Mammary epithelial cell (primary cell): ENCODE measurements at regions of chr3 and their contacts with region 1.

Region 1: GRCh38 chr3:177286034-177286433 is 88.8 kb upstream of the TBL1XR1 start:
- DNase-seq: peak; percentile 92
- H3K4me3 ChIP-seq: no peak overlapping the region
- H3K27ac ChIP-seq: peak overlapping the region; percentile 81
- H3K4me1 ChIP-seq: peaks cover 12% of the 10 kb centered on the region
- H3K27me3 ChIP-seq: no peaks in the 10 kb centered on the region
- CTCF ChIP-seq: no peak

Region 2: GRCh38 chr3:177333533-177334520 is 47.8 kb after region 1 on chr3:
- CTCF ChIA-PET with region 1: no interaction called
- dilution Hi-C with region 1: loop called (anchors 5 kb)
- in situ Hi-C with region 1: no loop called
- intact Hi-C with region 1: no loop called
- DNase-seq: no peak
- H3K4me3 ChIP-seq: no peak overlapping the region
- H3K27ac ChIP-seq: no peak overlapping the region
- H3K4me1 ChIP-seq: peaks cover 12% of the 10 kb centered on the region
- H3K27me3 ChIP-seq: no peaks in the 10 kb centered on the region
- CTCF ChIP-seq: no peak

Region 3: DNA sequence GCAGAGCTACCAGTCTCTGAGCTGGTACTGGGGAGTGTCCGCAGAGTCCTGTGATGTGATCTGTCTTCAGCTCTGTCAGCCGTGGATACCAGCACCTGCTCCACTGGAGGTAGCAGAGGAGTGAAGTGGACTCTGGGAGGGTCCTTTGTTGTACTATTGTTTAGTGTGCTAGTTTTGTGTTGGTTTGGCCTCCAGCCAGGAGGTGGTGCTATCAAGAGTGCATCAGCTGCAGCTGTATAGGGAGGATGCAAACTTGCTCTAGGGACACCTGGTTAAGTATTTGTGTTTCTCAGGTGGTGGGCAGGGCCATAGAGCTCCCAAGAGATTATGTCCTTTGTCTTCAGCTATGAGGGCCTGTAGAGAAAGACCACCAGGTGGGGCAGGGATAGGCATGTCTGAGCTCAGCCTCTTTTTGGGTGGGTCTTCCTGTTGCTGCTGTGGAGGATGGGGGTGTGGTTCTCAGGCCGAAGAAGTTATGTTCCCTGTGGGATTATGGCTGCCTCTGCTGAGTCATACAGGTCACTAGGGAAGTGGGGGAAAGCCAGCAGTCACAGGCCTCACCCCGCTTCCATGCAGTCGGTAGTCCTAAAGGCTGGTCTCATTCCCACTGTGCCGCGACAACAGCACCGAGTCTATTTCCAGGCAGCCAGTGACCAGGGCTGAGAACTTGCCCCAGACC is 354.4 kb after region 1 on chr3:
- CTCF ChIA-PET with region 1: no interaction called
- dilution Hi-C with region 1: no loop called
- in situ Hi-C with region 1: no loop called
- intact Hi-C with region 1: no loop called
- DNase-seq: no peak
- H3K4me3 ChIP-seq: no peak overlapping the region
- H3K27ac ChIP-seq: no peak overlapping the region
- H3K4me1 ChIP-seq: peaks cover 6% of the 10 kb centered on the region
- H3K27me3 ChIP-seq: no peaks in the 10 kb centered on the region
- CTCF ChIP-seq: no peak